ENCODE measurements at regions of chr9 and their contacts with region 1.

Region 1: GRCh38 chr9:134689321-134690181 is 47.9 kb downstream of the COL5A1 start:
- DNase-seq: no peak
- H3K4me3 ChIP-seq: no peak overlapping the region
- H3K27ac ChIP-seq: peak overlapping the region; percentile 3 to 34 (median 24)
- H3K4me1 ChIP-seq: peaks cover 3 to 45% (median 40%) of the 10 kb centered on the region in 4 donors
- H3K27me3 ChIP-seq: no peaks in the 10 kb centered on the region
- CTCF ChIP-seq: peak; percentile 83 to 97 (median 90)
- EP300 ChIP-seq: no peak
- POLR2A ChIP-seq: no peak

Region 2: DNA sequence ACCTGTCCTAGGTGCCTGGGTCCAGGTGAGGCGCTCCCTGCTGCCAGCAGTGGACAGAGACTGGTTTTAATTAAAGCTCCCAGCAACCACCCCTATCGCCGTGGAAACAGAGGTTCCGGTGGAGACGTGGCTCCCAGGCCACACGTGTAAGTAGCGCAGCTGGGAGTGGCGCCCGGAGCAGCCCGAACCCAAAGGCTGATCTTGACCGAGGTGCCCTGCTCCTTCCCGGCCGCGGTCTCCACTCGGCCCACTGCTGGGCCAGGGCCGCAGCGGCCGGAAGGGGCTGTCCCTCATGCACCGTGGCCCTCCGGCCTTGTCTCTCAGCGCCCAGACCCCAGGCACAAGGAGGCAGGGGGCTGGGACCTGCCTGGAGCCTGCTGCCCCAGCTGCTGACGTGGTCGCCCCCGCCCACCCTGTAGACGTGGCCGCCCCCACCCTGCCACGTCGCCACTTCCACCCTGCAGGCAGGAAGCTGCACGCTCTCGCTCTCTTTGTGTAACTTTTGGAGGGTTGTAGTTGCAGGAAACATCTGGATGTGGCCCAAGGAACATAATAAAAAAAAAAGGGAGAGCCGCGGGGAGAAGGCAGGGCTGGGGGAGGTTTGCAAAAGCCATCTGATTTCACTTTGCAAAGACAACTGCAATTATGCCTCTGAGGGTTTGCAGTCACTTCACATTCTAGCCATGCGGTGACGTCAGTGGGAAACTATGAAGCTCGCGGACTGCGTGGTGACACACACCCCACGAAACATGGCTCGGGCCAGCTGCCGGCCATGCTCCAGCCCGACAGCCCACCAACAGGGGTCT is 233.4 kb before region 1 on chr9:
- intact Hi-C with region 1: loop called (anchors 5 kb)
- DNase-seq: peak; percentile 95
- H3K4me3 ChIP-seq: peak overlapping the region; percentile 36 to 51 (median 44)
- H3K27ac ChIP-seq: peak overlapping the region; percentile 84 to 89 (median 84)
- H3K4me1 ChIP-seq: peaks cover 30 to 53% (median 41%) of the 10 kb centered on the region in 4 donors
- H3K27me3 ChIP-seq: no peaks in the 10 kb centered on the region
- CTCF ChIP-seq: no peak
- EP300 ChIP-seq: no peak
- POLR2A ChIP-seq: no peak

Region 3: GRCh38 chr9:134993996-134994720 is 304.6 kb after region 1 on chr9:
- intact Hi-C with region 1: no loop called
- DNase-seq: no peak
- H3K4me3 ChIP-seq: no peak overlapping the region
- H3K27ac ChIP-seq: no peak overlapping the region
- H3K4me1 ChIP-seq: no peaks in the 10 kb centered on the region
- H3K27me3 ChIP-seq: peaks cover 0 to 19% (median 0%) of the 10 kb centered on the region in 4 donors
- CTCF ChIP-seq: no peak
- EP300 ChIP-seq: no peak
- POLR2A ChIP-seq: no peak